ENCODE measurements at regions of chr22 and their contacts with region 1.

Region 1: GRCh38 chr22:37696657-37697537 is at the start of gene TRIOBP:
- DNase-seq: peak; percentile 99
- ATAC-seq: peak; percentile 98
- H3K4me3 Mint-ChIP-seq: peak within 1 kb of the TSS; percentile 96
- H3K27ac Mint-ChIP-seq: peak within 1 kb of the TSS; percentile 91
- H3K4me1 Mint-ChIP-seq: peaks cover 11% of the 10 kb centered on the region
- H3K27me3 Mint-ChIP-seq: no peaks in the 10 kb centered on the region
- CTCF ChIP-seq: no peak
- total RNA-seq, gene TRIOBP: 54.0 to 58.9 TPM (median 56.8 TPM) in 3 replicates

Region 2: GRCh38 chr22:37581504-37581903 is 115.4 kb before region 1 on chr22:
- CTCF ChIA-PET with region 1: no interaction called
- POLR2A ChIA-PET with region 1: no interaction called
- DNase-seq: no peak
- ATAC-seq: no peak
- H3K4me3 Mint-ChIP-seq: no peak overlapping the region
- H3K27ac Mint-ChIP-seq: no peak overlapping the region
- H3K4me1 Mint-ChIP-seq: peaks cover 4% of the 10 kb centered on the region
- H3K27me3 Mint-ChIP-seq: no peaks in the 10 kb centered on the region; the same call in 1 of the 2 replicates
- CTCF ChIP-seq: no peak

Region 3: GRCh38 chr22:37686002-37686982 is 10.6 kb before region 1 on chr22 and contains the start of gene NOL12:
- CTCF ChIA-PET with region 1: interaction called, 21 read pairs
- POLR2A ChIA-PET with region 1: no interaction called
- DNase-seq: peak; percentile 84
- ATAC-seq: peak; percentile 84
- H3K4me3 Mint-ChIP-seq: peak within 1 kb of the TSS; percentile 99
- H3K27ac Mint-ChIP-seq: peak within 1 kb of the TSS; percentile 96
- H3K4me1 Mint-ChIP-seq: peaks cover 10% of the 10 kb centered on the region
- H3K27me3 Mint-ChIP-seq: peaks cover 1% of the 10 kb centered on the region
- CTCF ChIP-seq: no peak
- total RNA-seq, gene NOL12: 20.3 to 24.9 TPM (median 22.0 TPM) in 3 replicates